Heart right ventricle (tissue), 16 donors: ENCODE measurements at regions of chr9 and their contacts with region 1.

Region 1: GRCh38 chr9:95092262-95093072 is 225.0 kb downstream of the FANCC start:
- DNase-seq: no peak
- ATAC-seq: peak in 6 of 8 donors; percentile 0 to 9 (median 2)
- H3K4me3 ChIP-seq: no peak overlapping the region
- H3K27ac ChIP-seq: peak overlapping the region; percentile 25 to 88 (median 80)
- H3K4me1 ChIP-seq: peaks cover 44 to 92% (median 87%) of the 10 kb centered on the region in 9 donors
- H3K27me3 ChIP-seq: no peaks in the 10 kb centered on the region
- CTCF ChIP-seq: no peak

Region 2: GRCh38 chr9:94933429-94933828 is 159.0 kb before region 1 on chr9:
- intact Hi-C with region 1: loop called in 1 of 10 experiments (anchors 5 kb)
- DNase-seq: no peak
- ATAC-seq: no peak
- H3K4me3 ChIP-seq: no peak overlapping the region
- H3K27ac ChIP-seq: peak overlapping the region in 2 of 10 donors; percentile 77 to 79
- H3K4me1 ChIP-seq: peaks cover 7 to 63% (median 30%) of the 10 kb centered on the region in 9 donors
- H3K27me3 ChIP-seq: no peaks in the 10 kb centered on the region
- CTCF ChIP-seq: no peak

Region 3: GRCh38 chr9:95018099-95018936 is 74.1 kb before region 1 on chr9:
- intact Hi-C with region 1: loop called in 2 of 10 experiments (anchors 10 kb)
- DNase-seq: peak; percentile 54 to 62
- ATAC-seq: peak; percentile 32 to 85 (median 78)
- H3K4me3 ChIP-seq: peak overlapping the region in 5 of 10 donors; percentile 12 to 27 (median 18)
- H3K27ac ChIP-seq: peak overlapping the region; percentile 20 to 87 (median 73)
- H3K4me1 ChIP-seq: peaks cover 22 to 100% (median 95%) of the 10 kb centered on the region in 9 donors
- H3K27me3 ChIP-seq: no peaks in the 10 kb centered on the region
- CTCF ChIP-seq: no peak

Region 4: DNA sequence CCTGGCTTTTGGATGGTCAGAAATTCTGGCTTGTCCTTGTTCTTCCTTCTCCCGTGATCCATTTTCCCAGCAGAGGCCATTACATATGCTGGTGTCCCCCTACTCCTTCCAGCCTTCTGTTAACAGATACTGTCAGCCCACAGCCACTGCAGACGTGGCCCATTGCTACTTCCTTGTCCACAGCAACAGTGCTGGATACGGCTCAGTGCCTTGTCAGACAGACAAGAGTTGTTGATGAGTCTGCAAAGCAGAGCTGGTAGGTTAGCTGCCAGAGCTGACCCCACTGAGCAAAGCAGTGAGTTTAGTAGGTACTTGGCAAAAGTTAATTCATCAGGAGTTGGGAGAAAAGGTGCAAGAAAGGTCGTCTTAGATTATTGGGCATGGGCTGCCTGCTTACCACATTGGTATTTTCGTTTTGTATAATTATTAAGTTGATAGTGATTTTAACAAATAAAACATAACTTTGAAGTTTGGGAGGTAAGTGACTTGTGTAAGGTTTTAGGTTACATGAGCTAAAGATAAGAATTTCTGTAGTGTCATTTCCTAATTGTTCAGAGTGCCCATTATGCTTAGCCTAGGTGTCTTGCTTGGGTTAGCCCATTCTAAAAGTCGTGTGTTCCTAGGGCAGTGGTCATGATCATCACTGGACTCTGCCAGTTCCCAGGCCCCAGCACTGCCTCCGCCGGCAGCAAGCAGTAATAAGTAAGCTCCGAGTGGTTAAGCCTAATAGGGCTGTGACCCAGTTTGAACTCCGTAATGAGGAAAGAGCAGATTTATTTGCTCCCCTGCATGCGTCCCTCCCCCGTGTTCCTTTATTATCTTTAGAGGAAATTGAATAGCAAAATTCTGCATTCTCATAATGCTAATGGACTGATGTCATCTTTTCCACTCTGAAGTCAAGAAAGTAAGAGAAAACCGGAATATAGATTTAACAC is 67.0 kb before region 1 on chr9:
- intact Hi-C with region 1: loop called in 2 of 10 experiments (anchors 10 kb)
- DNase-seq: peak; percentile 50 to 82
- ATAC-seq: peak; percentile 81 to 91 (median 86)
- H3K4me3 ChIP-seq: peak overlapping the region in 5 of 10 donors; percentile 6 to 20 (median 13)
- H3K27ac ChIP-seq: peak overlapping the region in 9 of 10 donors; percentile 2 to 87 (median 81)
- H3K4me1 ChIP-seq: peaks cover 21 to 100% (median 99%) of the 10 kb centered on the region in 9 donors
- H3K27me3 ChIP-seq: no peaks in the 10 kb centered on the region
- CTCF ChIP-seq: peak in 8 of 9 donors; percentile 26 to 61 (median 34)

Region 5: GRCh38 chr9:95031711-95032461 is 60.6 kb before region 1 on chr9:
- intact Hi-C with region 1: loop called in 2 of 10 experiments (anchors 10 kb)
- DNase-seq: no peak
- ATAC-seq: peak in 4 of 8 donors; percentile 1 to 40 (median 12)
- H3K4me3 ChIP-seq: no peak overlapping the region
- H3K27ac ChIP-seq: peak overlapping the region in 8 of 10 donors; percentile 25 to 81 (median 60)
- H3K4me1 ChIP-seq: peaks cover 6 to 100% (median 84%) of the 10 kb centered on the region in 9 donors
- H3K27me3 ChIP-seq: no peaks in the 10 kb centered on the region
- CTCF ChIP-seq: no peak

Region 6: DNA sequence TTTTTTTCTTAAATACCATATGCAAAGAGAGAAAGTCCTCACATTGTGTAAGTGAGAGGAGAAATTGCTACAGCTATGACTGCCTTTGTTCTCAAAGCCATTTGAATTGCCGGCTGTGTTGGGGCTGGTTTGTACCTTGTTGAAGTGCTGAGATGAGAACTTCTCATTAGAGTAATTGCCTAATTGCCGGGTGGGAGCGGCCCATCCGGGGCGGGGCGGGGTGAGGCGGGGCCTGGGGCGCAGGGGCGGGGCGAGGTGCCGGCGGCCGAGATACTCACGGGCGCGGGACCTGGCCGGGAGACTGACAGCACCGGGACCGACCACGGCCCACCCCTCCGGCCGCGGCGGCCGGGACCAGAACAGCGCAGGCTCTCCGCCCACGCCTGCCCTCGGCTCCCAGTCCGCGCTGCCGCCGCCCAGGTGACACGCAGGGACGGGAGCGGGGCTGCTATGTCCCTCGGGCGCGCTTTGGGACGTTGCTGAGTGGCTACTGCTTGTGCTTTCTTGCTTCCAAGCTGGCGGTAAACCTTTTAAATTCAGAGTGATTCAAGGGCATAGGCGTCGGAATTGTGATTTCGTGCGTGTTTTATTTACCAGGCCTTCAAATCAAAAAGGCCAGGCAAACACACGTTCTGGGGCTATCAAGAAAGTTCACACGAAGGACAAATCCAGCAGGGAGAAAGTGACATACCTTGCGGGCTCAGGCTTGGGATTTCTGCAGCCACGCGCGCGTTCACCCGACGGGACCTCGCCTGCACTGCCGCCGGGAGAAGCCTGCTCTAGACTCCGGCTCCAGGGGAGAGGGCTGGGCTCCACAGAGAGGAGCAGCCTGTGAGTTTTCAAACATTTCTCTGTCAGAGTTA is 44.0 kb before region 1 on chr9:
- intact Hi-C with region 1: loop called in 1 of 10 experiments (anchors 5 kb)
- DNase-seq: peak; percentile 61 to 78
- ATAC-seq: peak; percentile 67 to 89 (median 82)
- H3K4me3 ChIP-seq: peak overlapping the region; percentile 0 to 64 (median 53)
- H3K27ac ChIP-seq: peak overlapping the region; percentile 47 to 87 (median 79)
- H3K4me1 ChIP-seq: peaks cover 12 to 100% (median 77%) of the 10 kb centered on the region in 9 donors
- H3K27me3 ChIP-seq: peaks cover 0 to 11% (median 0%) of the 10 kb centered on the region in 7 donors
- CTCF ChIP-seq: no peak

Region 7: DNA sequence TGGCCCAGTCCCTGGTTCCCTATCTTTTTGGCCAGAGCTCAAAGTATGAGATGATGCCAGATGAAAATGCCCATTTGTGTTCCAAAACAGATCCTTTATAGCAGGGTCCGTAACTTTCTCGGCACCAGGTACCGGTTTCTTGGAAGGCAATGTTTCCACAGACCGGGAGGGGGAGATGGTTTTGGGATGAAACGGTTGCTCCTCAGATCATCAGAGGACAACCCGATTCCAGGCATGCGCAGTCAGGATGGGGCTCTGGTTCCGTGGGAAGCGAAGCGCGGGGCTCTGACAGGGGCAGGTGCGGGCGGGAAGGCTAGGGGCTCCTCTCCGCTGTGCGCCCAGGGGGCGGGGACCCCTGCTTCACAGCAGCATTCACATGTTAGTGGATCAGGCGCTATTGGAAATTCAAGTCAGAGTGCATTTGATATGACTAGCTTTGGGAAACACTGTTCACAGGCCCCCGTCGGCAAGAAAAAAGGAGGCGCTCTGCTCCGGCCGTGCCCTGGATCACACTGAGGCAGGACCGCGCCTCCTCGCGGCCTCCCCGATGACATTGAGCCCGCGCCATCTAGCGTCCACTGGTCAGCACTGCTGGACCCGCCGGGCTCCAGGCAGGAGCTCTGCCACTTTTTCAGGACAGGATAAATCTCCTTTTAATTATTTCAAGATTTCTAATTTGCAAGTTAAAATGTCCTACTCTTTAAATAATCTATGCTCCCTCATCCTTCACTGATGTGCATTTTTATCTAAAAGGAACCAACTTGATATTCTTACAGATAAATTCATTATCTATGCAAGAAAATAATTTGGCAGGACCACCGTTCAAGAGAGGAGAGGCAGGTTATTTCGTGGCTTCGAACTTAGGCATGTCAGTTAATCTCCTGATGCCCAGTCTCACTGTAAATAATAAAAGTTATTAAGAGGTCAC is 35.0 kb after region 1 on chr9:
- intact Hi-C with region 1: loop called in 1 of 10 experiments (anchors 2 kb)
- DNase-seq: peak; percentile 86 to 87
- ATAC-seq: peak; percentile 83 to 94 (median 90)
- H3K4me3 ChIP-seq: peak overlapping the region in 9 of 10 donors; percentile 21 to 53 (median 43)
- H3K27ac ChIP-seq: peak overlapping the region in 1 of 10 donors; percentile 36
- H3K4me1 ChIP-seq: peaks cover 0 to 11% (median 6%) of the 10 kb centered on the region in 9 donors
- H3K27me3 ChIP-seq: no peaks in the 10 kb centered on the region
- CTCF ChIP-seq: peak; percentile 92 to 100 (median 98)